Esophagus muscularis mucosa (tissue), 4 donors: ENCODE measurements at regions of chr3 and their contacts with region 1.

Region 1: DNA sequence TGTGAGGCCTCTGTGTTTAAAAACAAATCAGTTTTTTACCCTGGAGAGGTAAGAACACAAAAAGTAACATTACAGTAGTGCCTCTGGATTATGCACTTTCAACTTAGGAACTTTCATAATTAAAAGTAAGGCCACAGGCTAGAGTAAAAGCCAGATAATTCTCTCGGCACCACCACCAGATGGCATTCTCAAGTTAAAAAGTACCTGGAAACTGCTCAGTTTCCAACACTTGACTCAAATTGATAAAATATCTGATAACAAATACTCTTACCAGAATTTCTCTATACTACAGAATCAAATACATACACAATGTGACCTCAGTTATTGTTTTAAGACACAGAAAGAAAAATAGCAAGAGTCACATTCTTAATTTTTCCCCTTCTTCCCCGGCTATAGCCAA is 19.9 kb downstream of the SPICE1 start:
- DNase-seq: no peak
- H3K4me3 ChIP-seq: no peak overlapping the region
- H3K27ac ChIP-seq: no peak overlapping the region
- H3K4me1 ChIP-seq: no peaks in the 10 kb centered on the region
- H3K27me3 ChIP-seq: no peaks in the 10 kb centered on the region
- CTCF ChIP-seq: peak; percentile 41 to 50 (median 41)
- EP300 ChIP-seq: no peak
- POLR2A ChIP-seq: no peak

Region 2: DNA sequence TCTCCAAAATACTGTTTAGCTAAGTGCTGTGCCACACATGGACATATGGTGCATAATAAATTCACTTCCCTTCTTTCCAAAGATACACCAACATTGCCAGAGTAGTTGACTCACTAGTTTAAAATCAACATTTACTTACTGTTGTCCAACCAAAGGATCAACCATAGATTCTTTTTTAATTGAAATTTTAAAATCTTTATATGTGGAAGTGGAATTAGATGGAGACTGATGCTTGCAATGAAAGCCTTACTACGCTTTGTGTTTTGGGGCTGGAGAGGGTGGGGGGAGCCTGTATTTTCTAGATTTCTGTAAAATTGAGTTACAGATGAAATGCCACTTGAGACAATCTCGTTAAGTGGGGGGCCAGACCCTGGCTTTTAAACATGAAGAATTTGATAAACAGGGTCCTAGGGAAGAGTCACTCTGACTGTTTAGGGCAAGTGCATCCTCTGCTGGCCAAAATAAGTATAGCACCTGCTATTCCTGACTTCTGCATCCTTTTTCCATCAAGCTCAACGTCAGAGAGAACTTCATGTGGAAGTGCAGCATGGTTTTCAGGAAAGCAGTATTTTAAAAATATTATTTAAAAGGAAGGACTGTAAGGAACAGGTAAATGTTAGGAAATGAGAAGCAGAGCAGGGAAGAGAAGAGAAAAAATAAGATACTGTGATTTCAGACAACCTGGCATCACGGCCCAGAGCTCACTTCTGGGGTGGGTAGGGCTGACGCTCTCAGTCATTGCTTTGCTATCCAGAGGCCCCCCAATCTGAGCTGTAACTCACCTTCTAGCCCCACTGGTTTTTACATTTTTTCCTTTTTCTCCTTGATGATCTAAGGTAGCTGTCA is 207.0 kb before region 1 on chr3:
- intact Hi-C with region 1: no loop called
- DNase-seq: no peak
- H3K4me3 ChIP-seq: no peak overlapping the region
- H3K27ac ChIP-seq: peak overlapping the region; percentile 65 to 79 (median 70)
- H3K4me1 ChIP-seq: peaks cover 3 to 52% (median 44%) of the 10 kb centered on the region in 4 donors
- H3K27me3 ChIP-seq: no peaks in the 10 kb centered on the region
- CTCF ChIP-seq: peak; percentile 99 to 100 (median 100)
- EP300 ChIP-seq: no peak
- POLR2A ChIP-seq: no peak

Region 3: DNA sequence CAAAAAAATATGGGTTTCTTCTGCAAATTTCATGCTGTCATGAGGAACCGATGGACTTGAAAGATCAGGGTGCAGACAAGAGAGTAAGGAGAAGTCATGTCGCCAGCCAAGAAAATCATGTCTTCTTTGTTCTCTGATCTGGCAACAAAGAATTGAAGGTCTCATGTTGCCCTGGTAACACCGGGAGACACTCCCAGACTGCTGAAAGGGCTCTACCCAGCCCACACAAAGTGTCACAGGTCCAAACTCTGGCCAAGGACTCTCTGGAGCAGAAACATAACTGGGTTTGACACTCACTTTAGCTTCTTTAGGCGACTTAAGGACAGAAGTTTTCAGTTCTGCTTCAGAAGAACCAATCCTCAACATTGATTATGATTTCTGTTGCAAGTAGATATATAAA is 80.2 kb after region 1 on chr3:
- intact Hi-C with region 1: loop called (anchors 5 kb)
- DNase-seq: peak; percentile 86
- H3K4me3 ChIP-seq: no peak overlapping the region
- H3K27ac ChIP-seq: no peak overlapping the region
- H3K4me1 ChIP-seq: no peaks in the 10 kb centered on the region
- H3K27me3 ChIP-seq: peaks cover 0 to 5% (median 0%) of the 10 kb centered on the region in 4 donors
- CTCF ChIP-seq: no peak
- EP300 ChIP-seq: no peak
- POLR2A ChIP-seq: no peak

Region 4: DNA sequence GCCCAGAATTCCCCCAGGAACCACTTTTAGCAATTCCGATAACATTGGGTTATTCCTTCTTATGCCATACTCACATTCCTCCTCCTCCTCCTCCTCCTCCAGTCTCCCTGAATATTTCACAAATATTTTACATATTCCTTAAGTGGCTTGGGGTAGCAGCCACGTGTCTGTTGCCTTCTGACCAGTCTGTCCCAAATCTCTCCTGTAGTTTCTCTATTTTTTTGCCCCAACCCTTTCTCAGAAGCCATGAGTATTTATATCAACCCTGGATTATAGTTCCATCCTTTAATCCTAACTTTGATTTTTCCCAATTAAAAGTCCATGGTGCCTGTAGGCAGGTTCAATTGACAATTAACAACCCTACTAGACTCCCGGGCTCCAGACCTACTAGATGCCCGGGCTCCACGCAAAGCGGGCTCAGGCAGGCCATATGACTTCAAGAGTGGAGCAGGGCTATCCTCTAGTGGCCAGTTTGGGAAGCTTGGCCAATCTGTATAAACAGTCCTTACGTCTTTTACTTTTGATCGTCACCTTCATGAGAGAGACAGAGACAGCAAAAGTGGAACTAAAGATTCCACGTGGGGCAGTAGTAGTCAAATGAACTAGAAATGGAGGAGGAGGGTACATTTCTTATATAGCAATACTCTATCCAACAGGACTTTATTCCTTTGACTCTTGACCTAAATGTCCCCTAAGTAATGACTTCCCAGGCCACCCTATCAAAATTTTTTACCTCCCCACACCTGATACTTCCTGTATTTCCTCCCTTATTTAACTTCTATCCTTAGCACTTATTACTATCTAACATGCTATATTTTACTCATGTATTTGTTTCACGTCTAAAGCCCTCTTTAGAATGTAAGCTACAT is 131.7 kb after region 1 on chr3:
- intact Hi-C with region 1: loop called (anchors 2 kb)
- DNase-seq: no peak
- H3K4me3 ChIP-seq: peak overlapping the region; percentile 6 to 28 (median 12)
- H3K27ac ChIP-seq: no peak overlapping the region
- H3K4me1 ChIP-seq: peaks cover 0 to 33% (median 28%) of the 10 kb centered on the region in 4 donors
- H3K27me3 ChIP-seq: no peaks in the 10 kb centered on the region
- CTCF ChIP-seq: peak; percentile 78 to 93 (median 92)
- EP300 ChIP-seq: no peak
- POLR2A ChIP-seq: no peak

Region 5: GRCh38 chr3:113745273-113746068 is 250.4 kb after region 1 on chr3:
- intact Hi-C with region 1: loop called (anchors 5 kb)
- DNase-seq: no peak
- H3K4me3 ChIP-seq: peak overlapping the region; percentile 67 to 96 (median 88)
- H3K27ac ChIP-seq: peak overlapping the region; percentile 93 to 97 (median 96)
- H3K4me1 ChIP-seq: peaks cover 32 to 71% (median 64%) of the 10 kb centered on the region in 4 donors
- H3K27me3 ChIP-seq: no peaks in the 10 kb centered on the region
- CTCF ChIP-seq: peak; percentile 54 to 74 (median 58)
- EP300 ChIP-seq: no peak
- POLR2A ChIP-seq: no peak